Activated CD4-positive, alpha-beta T cell treated with anti-CD3 and anti-CD28 coated beads, Interleukin-2, amount 10 ng/mL, durations not matched to agents 24 days and 14 days (primary cell): ENCODE measurements at regions of chr7 and their contacts with region 1.

Region 1: DNA sequence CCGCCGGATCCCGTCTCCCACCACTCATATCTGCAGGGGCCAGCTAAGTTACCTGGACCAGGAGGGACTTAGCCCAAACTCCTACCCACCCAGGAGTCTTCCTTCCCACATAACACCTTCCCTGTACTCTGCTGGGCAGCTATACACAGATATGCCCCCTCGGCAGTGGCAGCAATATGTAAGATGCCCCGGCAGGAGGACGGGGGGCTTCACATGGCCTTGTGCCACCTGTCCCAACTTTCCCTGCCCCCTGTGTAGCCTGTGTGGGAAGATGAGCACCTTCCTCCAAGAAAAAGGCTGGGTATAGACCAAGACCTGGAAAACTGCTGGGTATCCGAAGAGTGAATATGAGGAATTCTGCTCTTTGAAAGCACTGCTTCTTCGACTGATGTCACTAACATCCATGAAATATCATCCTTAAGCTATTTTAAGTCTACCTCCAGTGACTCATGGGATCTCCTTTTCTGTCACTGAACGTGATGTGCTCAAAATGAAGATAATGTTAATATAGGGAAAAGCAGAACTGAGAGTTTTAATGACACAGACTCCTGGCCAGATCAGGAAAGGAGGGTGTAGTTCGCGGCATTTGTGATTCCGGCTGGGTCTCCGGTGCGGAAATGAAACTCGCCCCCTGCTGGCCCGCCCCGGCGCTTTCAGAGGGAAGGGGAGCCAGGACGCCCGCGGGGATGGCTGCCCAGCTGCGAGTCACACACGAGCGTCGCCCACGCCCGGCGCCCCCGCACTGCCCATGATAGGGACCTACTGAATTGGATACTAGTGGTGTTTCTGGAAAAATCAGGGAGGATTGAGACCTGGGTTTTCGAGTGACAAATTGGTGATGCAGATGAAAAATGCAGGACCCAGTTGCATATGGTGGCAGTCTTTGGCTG is 256.9 kb upstream of the NFE2L3 start:
- DNase-seq: peak; percentile 90
- H3K4me3 Mint-ChIP-seq: peak overlapping the region; percentile 75
- H3K27ac Mint-ChIP-seq: no peak overlapping the region
- H3K4me1 Mint-ChIP-seq: peaks cover 25% of the 10 kb centered on the region
- H3K27me3 Mint-ChIP-seq: peaks cover 17% of the 10 kb centered on the region

Region 2: DNA sequence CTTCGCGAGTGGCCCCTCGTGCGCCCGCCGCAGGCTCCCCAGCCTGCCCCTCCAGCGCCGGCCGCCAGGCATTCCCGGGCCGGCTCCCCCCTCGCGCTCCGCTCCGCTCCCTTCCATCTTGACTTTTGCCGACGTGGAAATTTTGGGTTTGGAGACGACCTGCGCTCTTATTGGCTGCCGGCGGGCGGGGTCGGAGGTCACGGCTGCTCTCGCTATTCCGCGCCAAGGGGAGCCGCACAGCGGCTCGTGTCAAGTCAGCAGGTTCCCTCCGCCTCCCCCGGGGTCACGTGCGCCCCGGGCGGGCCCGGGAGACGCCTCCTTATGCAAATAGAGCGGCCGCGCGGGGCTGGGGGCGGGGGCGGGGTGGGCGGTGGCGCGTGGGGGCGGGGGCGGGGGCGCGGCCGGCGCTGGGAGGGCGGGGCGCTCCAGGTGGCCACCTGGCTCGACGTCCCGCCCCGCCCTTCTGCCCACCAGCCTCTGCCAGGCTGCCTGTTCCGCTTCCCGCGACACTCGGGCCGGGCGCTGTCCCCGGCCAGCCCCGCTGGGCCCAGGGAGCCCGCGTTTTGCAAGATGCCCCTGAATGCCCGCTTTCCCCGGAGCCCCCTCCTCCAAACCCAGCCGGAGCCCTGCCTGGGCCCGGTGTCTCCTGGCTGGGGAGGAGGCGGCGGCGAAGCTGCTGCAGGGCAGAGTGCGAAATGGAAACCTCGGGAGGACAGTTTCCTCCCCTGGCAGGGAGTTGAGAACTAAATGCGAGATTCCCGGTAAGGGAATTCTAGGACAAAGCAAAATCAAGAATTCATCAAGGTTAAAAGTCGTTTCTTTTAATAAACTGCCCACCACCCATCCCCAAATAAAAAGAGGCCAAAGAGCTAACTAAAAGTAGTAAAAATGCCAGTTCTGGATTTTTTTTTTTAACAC is 56.1 kb after region 1 on chr7:
- intact Hi-C with region 1: loop called (anchors 2 kb)
- DNase-seq: peak; percentile 96
- H3K4me3 Mint-ChIP-seq: peak overlapping the region; percentile 90
- H3K27ac Mint-ChIP-seq: peak overlapping the region; percentile 86
- H3K4me1 Mint-ChIP-seq: peaks cover 14% of the 10 kb centered on the region
- H3K27me3 Mint-ChIP-seq: peaks cover 15% of the 10 kb centered on the region

Region 3: DNA sequence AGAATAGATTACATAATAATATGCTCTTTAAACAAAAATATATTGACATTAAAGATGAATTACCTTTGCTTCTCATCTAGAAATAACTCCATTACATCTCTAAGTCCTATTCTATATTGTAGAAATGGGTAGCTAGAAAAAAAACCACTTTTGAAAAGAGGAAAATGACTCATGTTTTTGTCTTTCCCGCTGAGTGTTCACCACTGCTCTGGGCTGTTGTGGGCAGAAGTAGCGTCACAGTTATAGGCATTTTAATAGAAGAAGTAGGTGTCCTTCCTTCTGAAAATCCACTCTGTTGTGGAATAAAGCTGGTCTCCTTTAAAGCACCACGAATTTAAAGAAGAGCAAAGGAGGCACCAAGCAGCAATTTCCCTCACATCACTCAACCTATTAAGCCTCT is 139.2 kb after region 1 on chr7:
- intact Hi-C with region 1: no loop called
- DNase-seq: no peak
- H3K4me3 Mint-ChIP-seq: no peak overlapping the region
- H3K27ac Mint-ChIP-seq: no peak overlapping the region
- H3K4me1 Mint-ChIP-seq: peaks cover 9% of the 10 kb centered on the region
- H3K27me3 Mint-ChIP-seq: peaks cover 18% of the 10 kb centered on the region

Region 4: GRCh38 chr7:26187380-26188205 is 292.4 kb after region 1 on chr7:
- intact Hi-C with region 1: loop called (anchors 2 kb)
- DNase-seq: no peak
- H3K4me3 Mint-ChIP-seq: peak overlapping the region; percentile 12
- H3K27ac Mint-ChIP-seq: peak overlapping the region; percentile 85
- H3K4me1 Mint-ChIP-seq: peaks cover 61% of the 10 kb centered on the region
- H3K27me3 Mint-ChIP-seq: no peaks in the 10 kb centered on the region

Region 5: GRCh38 chr7:26500749-26501352 is 605.7 kb after region 1 on chr7:
- intact Hi-C with region 1: loop called (anchors 2 kb)
- DNase-seq: no peak
- H3K4me3 Mint-ChIP-seq: no peak overlapping the region
- H3K27ac Mint-ChIP-seq: no peak overlapping the region
- H3K4me1 Mint-ChIP-seq: no peaks in the 10 kb centered on the region
- H3K27me3 Mint-ChIP-seq: peaks cover 5% of the 10 kb centered on the region